Endothelial cell of umbilical vein (primary cell): ENCODE measurements at regions of chr20 and their contacts with region 1.

Region 1: DNA sequence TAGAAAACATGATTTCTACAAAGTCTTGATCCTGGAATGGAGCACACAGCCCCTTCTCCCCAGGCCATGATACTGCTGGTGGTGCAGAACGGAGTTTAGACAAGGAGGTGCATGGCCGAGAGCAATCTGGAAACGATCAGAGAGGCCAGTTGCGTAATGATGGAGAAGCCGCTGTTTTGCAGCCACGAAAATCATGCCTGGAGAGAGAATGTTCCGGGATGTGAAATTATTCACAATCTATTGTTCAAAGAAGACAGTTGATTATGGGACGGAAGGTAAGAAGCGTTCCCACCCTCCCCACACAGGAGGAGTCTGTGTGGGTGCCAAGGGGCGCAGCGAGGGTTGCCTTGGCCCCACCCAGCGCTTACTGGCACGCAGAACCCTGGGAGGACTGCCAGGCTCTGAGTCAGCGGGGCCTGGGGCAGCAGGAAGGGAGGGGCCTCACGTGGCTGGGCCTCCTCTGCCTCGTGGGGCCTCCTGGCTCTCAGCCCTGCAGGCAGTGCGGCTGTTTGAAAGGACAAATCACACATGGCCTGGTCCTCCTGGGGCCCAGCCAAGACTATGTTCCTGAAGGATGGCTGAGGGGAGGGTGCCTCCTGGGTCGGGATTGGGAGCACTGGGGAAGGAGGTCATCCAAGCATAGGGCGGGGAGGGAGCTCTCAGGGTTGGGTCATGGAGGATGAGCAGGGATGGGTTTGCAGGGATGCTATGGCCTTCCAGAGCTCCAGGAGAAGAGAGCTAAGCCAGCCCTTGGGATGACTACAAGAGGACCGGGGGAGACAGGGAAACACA is 8.7 kb upstream of the AP5S1 start:
- DNase-seq: peak; percentile 97
- H3K4me3 ChIP-seq: peak overlapping the region in 2 of 3 experiments; percentile 10 to 42
- H3K27ac ChIP-seq: peak overlapping the region; percentile 68
- H3K4me1 ChIP-seq: peaks cover 31% of the 10 kb centered on the region
- H3K27me3 ChIP-seq: no peaks in the 10 kb centered on the region
- CTCF ChIP-seq: no peak
- POLR2A ChIP-seq: peak; percentile 50

Region 2: GRCh38 chr20:3632311-3633004 is 179.2 kb before region 1 on chr20:
- CTCF ChIA-PET with region 1: no interaction called
- POLR2A ChIA-PET with region 1: no interaction called
- dilution Hi-C with region 1: no loop called
- intact Hi-C with region 1: no loop called
- DNase-seq: no peak
- H3K4me3 ChIP-seq: no peak overlapping the region
- H3K27ac ChIP-seq: no peak overlapping the region
- H3K4me1 ChIP-seq: no peaks in the 10 kb centered on the region
- H3K27me3 ChIP-seq: no peaks in the 10 kb centered on the region
- CTCF ChIP-seq: no peak
- POLR2A ChIP-seq: no peak

Region 3: DNA sequence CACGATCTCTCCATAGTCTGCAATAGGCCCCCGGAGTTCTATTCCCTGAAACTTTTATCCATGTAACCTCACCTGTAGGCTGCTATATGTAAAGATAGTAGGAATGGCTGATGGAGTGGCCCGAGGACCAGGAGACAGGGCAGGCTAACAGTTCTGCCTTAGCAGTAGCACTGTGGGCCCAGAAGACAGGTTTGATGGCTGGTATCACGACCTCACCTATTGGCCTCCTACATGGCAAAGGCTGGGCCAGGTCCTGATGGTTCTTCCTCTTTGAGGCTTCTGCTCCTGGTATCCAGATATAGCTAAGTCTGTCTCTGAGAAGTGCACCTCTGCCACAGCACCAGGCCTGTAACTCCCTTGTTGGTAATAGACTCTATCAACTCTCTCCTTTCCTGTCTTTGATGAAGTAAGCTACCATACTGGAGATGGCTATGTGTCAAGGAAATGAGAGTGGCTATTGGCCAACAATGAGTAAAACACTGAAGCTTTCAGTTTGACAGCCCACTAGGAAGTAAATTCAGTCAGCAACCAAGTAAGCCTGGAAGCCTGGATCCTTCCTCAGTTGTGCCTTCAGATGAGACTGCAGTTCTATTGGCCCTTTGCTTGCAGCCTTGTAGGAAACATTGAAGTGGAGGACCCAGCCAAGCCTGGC is 36.1 kb before region 1 on chr20:
- CTCF ChIA-PET with region 1: no interaction called
- POLR2A ChIA-PET with region 1: no interaction called
- dilution Hi-C with region 1: no loop called
- intact Hi-C with region 1: no loop called
- DNase-seq: no peak
- H3K4me3 ChIP-seq: no peak overlapping the region
- H3K27ac ChIP-seq: no peak overlapping the region
- H3K4me1 ChIP-seq: peaks cover 12% of the 10 kb centered on the region
- H3K27me3 ChIP-seq: peaks cover 8 to 19% of the 10 kb centered on the region in 2 experiments
- CTCF ChIP-seq: no peak
- POLR2A ChIP-seq: no peak

Region 4: GRCh38 chr20:3786665-3787323 is 24.9 kb before region 1 on chr20 and contains the start of gene CENPB:
- CTCF ChIA-PET with region 1: interaction called, 214 read pairs
- POLR2A ChIA-PET with region 1: no interaction called
- dilution Hi-C with region 1: no loop called
- intact Hi-C with region 1: no loop called
- DNase-seq: peak; percentile 83
- H3K4me3 ChIP-seq: peak within 1 kb of the TSS; percentile 30 to 62 (median 58)
- H3K27ac ChIP-seq: peak within 1 kb of the TSS; percentile 0
- H3K4me1 ChIP-seq: peaks cover 18% of the 10 kb centered on the region
- H3K27me3 ChIP-seq: no peaks in the 10 kb centered on the region
- CTCF ChIP-seq: peak; percentile 56 to 62
- POLR2A ChIP-seq: no peak
- total RNA-seq, gene CENPB: 82.2 and 90.3 TPM in 2 replicates

Region 5: GRCh38 chr20:3795511-3796468 is 15.9 kb before region 1 on chr20 and contains the start of gene CDC25B:
- CTCF ChIA-PET with region 1: interaction called, 3 read pairs
- POLR2A ChIA-PET with region 1: no interaction called
- dilution Hi-C with region 1: no loop called
- intact Hi-C with region 1: loop called (anchors 1 kb)
- DNase-seq: peak; percentile 88
- H3K4me3 ChIP-seq: peak within 1 kb of the TSS; percentile 66 to 90 (median 70)
- H3K27ac ChIP-seq: peak within 1 kb of the TSS; percentile 84
- H3K4me1 ChIP-seq: peaks cover 20% of the 10 kb centered on the region
- H3K27me3 ChIP-seq: no peaks in the 10 kb centered on the region
- CTCF ChIP-seq: peak in 1 of 2 donors; percentile 49
- POLR2A ChIP-seq: peak; percentile 61
- total RNA-seq, gene CDC25B: 62.2 and 76.5 TPM in 2 replicates

Region 6: GRCh38 chr20:4283016-4283415 is 471.4 kb after region 1 on chr20:
- CTCF ChIA-PET with region 1: no interaction called
- POLR2A ChIA-PET with region 1: no interaction called
- dilution Hi-C with region 1: no loop called
- intact Hi-C with region 1: no loop called
- DNase-seq: no peak
- H3K4me3 ChIP-seq: no peak overlapping the region
- H3K27ac ChIP-seq: no peak overlapping the region
- H3K4me1 ChIP-seq: no peaks in the 10 kb centered on the region
- H3K27me3 ChIP-seq: peaks cover 0 to 5% of the 10 kb centered on the region in 2 experiments
- CTCF ChIP-seq: no peak
- POLR2A ChIP-seq: no peak

Region 7: GRCh38 chr20:4573564-4574355 is 762.1 kb after region 1 on chr20:
- CTCF ChIA-PET with region 1: no interaction called
- POLR2A ChIA-PET with region 1: no interaction called
- dilution Hi-C with region 1: no loop called
- intact Hi-C with region 1: no loop called
- DNase-seq: no peak
- H3K4me3 ChIP-seq: no peak overlapping the region
- H3K27ac ChIP-seq: no peak overlapping the region
- H3K4me1 ChIP-seq: no peaks in the 10 kb centered on the region
- H3K27me3 ChIP-seq: peaks cover 11 to 29% of the 10 kb centered on the region in 2 experiments
- CTCF ChIP-seq: no peak
- POLR2A ChIP-seq: no peak